ENCODE measurements at regions of chr22 and their contacts with region 1.

Region 1: DNA sequence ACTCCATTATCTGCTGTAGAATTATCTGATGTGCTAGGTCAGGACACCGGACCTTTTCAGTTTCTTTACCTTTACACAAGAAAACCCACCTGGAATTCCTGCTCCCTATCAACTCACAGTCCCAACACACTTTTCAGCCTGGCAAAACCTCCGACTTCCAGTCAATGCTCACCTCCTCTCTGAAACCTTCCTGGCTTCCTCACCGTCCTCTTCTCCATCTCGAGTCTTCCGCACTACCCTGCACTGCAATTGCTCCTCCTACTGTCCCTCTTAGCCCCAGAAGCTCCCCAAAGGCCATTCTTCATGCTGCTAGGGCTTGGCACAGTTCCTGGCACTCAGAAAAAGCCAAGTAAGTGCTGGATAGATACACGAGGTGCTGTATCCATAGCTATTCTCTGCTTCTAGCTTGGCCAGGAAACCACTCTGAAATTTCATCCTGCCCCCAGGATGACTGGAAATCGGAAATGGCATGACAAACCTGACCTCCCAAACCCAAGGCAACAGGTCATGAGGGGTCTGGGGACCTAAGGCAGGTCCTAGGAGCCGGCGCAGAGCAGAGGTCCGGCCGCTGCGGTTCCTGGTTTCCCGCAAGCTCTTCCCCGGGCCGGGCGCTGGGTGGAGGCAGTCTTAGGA is 702 bp downstream of the SYN3 start:
- DNase-seq: no peak
- ATAC-seq: peak; percentile 26
- H3K4me3 Mint-ChIP-seq: peak overlapping the region; percentile 76
- H3K27ac Mint-ChIP-seq: no peak overlapping the region
- H3K4me1 Mint-ChIP-seq: peaks cover 69% of the 10 kb centered on the region
- H3K27me3 Mint-ChIP-seq: peaks cover 81% of the 10 kb centered on the region
- CTCF ChIP-seq: no peak

Region 2: DNA sequence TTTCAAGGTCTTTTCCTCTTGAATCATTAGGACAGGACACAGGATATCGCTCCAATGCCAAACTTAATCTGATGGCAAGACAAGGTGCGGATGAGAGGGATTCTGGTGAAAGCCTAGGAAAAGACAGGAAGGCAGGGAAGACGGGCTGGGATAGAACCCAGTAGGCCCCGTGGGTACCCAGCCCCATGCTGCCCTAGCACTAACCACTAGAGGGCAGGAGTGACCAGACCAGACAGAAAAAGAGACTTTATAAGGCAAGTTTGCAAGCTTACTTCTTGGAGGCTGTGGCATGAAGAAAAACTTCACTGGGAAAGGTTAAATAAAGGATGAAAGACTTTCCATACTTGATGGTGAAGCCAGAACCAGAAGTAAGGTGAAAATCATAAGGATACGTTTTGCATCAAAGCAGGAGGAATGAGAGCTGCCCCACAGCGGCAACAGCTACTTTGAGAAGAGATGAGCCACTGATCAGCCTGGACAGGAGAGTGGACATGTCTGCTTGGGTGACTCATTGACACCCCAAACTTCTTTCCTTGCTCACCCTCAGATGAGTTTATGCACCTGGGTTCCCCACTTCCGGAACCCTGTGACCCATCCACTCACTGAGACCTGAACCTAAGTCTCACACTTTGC is 39.1 kb before region 1 on chr22:
- CTCF ChIA-PET with region 1: interaction called, 57 read pairs
- POLR2A ChIA-PET with region 1: no interaction called
- DNase-seq: peak; percentile 87
- ATAC-seq: peak; percentile 97
- H3K4me3 Mint-ChIP-seq: no peak overlapping the region
- H3K27ac Mint-ChIP-seq: no peak overlapping the region
- H3K4me1 Mint-ChIP-seq: peaks cover 13% of the 10 kb centered on the region
- H3K27me3 Mint-ChIP-seq: no peaks in the 10 kb centered on the region
- CTCF ChIP-seq: peak; percentile 83

Region 3: DNA sequence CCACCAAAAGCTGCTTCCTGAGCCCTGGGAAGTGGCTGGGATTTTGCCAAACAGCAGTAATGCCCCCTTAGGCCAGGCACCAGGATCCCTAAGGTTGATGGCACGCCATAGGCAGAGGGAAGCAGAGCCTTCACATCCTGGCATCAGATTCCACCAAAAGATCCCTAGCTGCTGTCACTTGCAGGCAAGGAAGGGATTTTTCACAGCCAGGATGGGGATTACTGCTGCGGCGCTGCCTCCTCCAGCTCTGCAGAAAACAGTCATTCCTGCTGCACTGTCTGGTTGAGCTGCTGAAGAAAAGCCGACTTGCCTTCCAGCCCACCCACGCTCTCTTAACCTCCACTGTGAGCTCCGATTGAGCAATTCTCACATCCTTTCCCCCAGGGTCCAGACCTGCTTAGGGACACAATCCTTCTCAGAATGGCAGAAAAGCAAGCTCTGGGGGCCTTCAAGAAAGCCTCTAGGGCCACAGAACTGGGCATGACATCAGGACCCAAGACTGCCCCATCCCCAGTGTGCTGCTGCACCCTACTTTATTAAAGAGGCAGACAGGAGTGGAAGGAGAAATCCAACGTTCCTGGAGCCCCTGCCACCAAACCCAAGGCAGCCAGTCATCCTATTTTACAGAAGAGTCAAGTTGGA is 19.2 kb before region 1 on chr22:
- CTCF ChIA-PET with region 1: interaction called, 14 read pairs
- POLR2A ChIA-PET with region 1: no interaction called
- DNase-seq: no peak
- ATAC-seq: peak; percentile 59
- H3K4me3 Mint-ChIP-seq: no peak overlapping the region
- H3K27ac Mint-ChIP-seq: no peak overlapping the region
- H3K4me1 Mint-ChIP-seq: peaks cover 47% of the 10 kb centered on the region
- H3K27me3 Mint-ChIP-seq: peaks cover 31% of the 10 kb centered on the region
- CTCF ChIP-seq: no peak

Region 4: DNA sequence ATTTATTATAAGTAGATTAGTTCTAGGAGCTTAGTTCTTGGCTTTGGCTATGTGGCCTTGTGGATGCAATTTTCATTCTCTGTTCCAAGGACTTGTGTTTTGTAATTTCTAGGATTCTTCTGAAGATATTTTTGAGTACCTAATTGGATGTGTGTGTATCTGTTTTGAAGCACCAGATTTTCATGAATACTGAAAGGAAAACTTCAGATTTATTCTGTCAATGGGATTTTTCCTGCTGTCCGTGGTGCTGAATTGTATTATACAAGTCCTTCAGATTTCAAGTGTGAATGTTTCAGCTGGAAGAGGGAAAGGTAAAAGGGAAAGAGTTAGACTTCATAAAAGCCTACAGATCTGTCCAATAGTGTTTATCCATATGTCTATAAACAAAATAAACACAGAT is 18.9 kb after region 1 on chr22:
- CTCF ChIA-PET with region 1: interaction called, 11 read pairs
- POLR2A ChIA-PET with region 1: no interaction called
- DNase-seq: no peak
- ATAC-seq: no peak
- H3K4me3 Mint-ChIP-seq: no peak overlapping the region
- H3K27ac Mint-ChIP-seq: no peak overlapping the region
- H3K4me1 Mint-ChIP-seq: no peaks in the 10 kb centered on the region
- H3K27me3 Mint-ChIP-seq: peaks cover 52% of the 10 kb centered on the region
- CTCF ChIP-seq: no peak

Region 5: GRCh38 chr22:33090836-33091235 is 33.4 kb after region 1 on chr22:
- CTCF ChIA-PET with region 1: no interaction called
- POLR2A ChIA-PET with region 1: no interaction called
- DNase-seq: no peak
- ATAC-seq: no peak
- H3K4me3 Mint-ChIP-seq: no peak overlapping the region
- H3K27ac Mint-ChIP-seq: no peak overlapping the region
- H3K4me1 Mint-ChIP-seq: peaks cover 18% of the 10 kb centered on the region
- H3K27me3 Mint-ChIP-seq: peaks cover 18% of the 10 kb centered on the region
- CTCF ChIP-seq: no peak

Region 6: DNA sequence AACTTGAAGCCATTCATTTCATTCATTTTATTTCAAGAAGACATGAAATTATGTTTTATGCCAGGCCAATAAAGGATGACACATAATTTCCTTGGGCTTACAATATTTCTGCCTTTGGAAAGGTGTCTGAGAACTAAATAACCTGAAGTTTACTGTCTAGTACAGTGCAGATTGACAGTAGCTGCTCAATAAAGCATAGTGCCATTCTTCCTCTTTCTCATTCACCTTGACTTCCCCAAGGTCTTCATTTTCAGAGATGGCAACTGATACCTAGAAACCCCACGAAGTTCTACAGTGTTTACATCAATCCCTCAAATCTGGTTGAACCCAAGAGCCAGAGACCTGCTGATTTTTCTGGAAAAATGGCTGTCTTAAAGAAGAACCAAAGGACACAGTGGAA is 145.0 kb after region 1 on chr22:
- CTCF ChIA-PET with region 1: interaction called, 12 read pairs
- POLR2A ChIA-PET with region 1: no interaction called
- DNase-seq: no peak
- ATAC-seq: no peak
- H3K4me3 Mint-ChIP-seq: no peak overlapping the region
- H3K27ac Mint-ChIP-seq: no peak overlapping the region
- H3K4me1 Mint-ChIP-seq: no peaks in the 10 kb centered on the region
- H3K27me3 Mint-ChIP-seq: peaks cover 71% of the 10 kb centered on the region
- CTCF ChIP-seq: no peak

Measured in WTC11 (cell line).